Caco-2 (cell line): ENCODE measurements at regions of chr7 and their contacts with region 1.

Region 1: DNA sequence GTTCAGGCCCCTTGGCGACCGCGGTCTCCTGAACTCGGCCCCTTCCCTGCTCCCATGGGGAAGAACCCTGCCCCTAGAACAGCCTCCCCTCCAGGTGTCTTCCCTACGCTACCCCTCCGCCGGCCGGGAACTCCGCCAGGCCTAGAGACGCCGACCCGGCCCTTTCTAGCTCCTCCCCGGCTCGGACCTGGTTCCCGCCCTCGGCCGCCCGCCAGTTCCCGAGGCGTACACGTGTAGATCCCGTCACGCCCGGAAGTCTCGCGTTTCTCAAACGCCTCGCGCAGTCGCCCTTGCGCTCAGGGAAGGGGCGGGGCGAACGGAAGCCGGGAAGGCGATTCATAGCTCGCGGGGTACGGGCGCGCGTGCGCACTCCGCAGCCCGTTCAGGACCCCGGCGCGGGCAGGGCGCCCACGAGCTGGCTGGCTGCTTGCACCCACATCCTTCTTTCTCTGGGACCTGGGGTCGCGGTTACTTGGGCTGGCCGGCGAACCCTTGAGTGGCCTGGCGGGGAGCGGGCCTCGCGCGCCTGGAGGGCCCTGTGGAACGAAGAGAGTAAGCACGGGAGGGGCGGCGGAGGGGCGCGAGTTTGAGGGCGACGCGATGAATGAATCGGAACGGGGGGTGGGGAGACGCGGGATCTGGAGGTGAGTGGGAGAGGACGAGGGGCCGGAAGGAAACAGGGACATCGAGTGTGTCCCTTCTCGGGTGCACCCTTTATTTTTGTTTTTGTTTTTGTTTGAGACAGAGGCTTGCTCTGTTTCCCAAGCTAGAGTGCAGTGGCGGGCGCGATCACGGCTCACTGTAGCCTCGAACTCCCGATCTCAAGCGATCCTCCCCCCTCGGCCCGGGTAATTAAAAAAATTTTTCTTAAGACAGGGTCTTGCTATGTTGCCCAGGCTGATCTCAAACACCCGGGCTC is at the start of gene POP7:
- DNase-seq: peak; percentile 99
- H3K4me3 ChIP-seq: peak within 1 kb of the TSS; percentile 81
- H3K4me3 Mint-ChIP-seq: peak within 1 kb of the TSS; percentile 98
- H3K27ac Mint-ChIP-seq: peak within 1 kb of the TSS; percentile 97
- H3K4me1 ChIP-seq: peaks cover 7% of the 10 kb centered on the region
- H3K4me1 Mint-ChIP-seq: peaks cover 6% of the 10 kb centered on the region
- H3K27me3 ChIP-seq: no peaks in the 10 kb centered on the region
- H3K27me3 Mint-ChIP-seq: no peaks in the 10 kb centered on the region
- CTCF ChIP-seq: no peak
- total RNA-seq, gene POP7: 65.7 and 66.9 TPM in 2 replicates

Region 2: GRCh38 chr7:100570954-100571828 is 134.8 kb before region 1 on chr7:
- CTCF ChIA-PET with region 1: no interaction called
- POLR2A ChIA-PET with region 1: no interaction called
- intact Hi-C with region 1: no loop called
- DNase-seq: peak in 1 of 2 experiments; percentile 53
- H3K4me3 ChIP-seq: no peak overlapping the region
- H3K4me3 Mint-ChIP-seq: no peak overlapping the region
- H3K27ac Mint-ChIP-seq: peak overlapping the region; percentile 85
- H3K4me1 ChIP-seq: peaks cover 32% of the 10 kb centered on the region
- H3K4me1 Mint-ChIP-seq: peaks cover 15% of the 10 kb centered on the region
- H3K27me3 ChIP-seq: no peaks in the 10 kb centered on the region
- H3K27me3 Mint-ChIP-seq: no peaks in the 10 kb centered on the region
- CTCF ChIP-seq: peak in 1 of 2 experiments; percentile 2

Region 3: GRCh38 chr7:100632951-100633717 is 72.9 kb before region 1 on chr7:
- CTCF ChIA-PET with region 1: interaction called, 13 read pairs
- POLR2A ChIA-PET with region 1: interaction called, 7 read pairs
- intact Hi-C with region 1: no loop called
- DNase-seq: peak; percentile 85 to 86
- H3K4me3 ChIP-seq: peak overlapping the region; percentile 52
- H3K4me3 Mint-ChIP-seq: peak overlapping the region; percentile 79
- H3K27ac Mint-ChIP-seq: peak overlapping the region; percentile 92
- H3K4me1 ChIP-seq: no peaks in the 10 kb centered on the region
- H3K4me1 Mint-ChIP-seq: no peaks in the 10 kb centered on the region
- H3K27me3 ChIP-seq: no peaks in the 10 kb centered on the region
- H3K27me3 Mint-ChIP-seq: no peaks in the 10 kb centered on the region
- CTCF ChIP-seq: peak; percentile 67 to 70

Region 4: DNA sequence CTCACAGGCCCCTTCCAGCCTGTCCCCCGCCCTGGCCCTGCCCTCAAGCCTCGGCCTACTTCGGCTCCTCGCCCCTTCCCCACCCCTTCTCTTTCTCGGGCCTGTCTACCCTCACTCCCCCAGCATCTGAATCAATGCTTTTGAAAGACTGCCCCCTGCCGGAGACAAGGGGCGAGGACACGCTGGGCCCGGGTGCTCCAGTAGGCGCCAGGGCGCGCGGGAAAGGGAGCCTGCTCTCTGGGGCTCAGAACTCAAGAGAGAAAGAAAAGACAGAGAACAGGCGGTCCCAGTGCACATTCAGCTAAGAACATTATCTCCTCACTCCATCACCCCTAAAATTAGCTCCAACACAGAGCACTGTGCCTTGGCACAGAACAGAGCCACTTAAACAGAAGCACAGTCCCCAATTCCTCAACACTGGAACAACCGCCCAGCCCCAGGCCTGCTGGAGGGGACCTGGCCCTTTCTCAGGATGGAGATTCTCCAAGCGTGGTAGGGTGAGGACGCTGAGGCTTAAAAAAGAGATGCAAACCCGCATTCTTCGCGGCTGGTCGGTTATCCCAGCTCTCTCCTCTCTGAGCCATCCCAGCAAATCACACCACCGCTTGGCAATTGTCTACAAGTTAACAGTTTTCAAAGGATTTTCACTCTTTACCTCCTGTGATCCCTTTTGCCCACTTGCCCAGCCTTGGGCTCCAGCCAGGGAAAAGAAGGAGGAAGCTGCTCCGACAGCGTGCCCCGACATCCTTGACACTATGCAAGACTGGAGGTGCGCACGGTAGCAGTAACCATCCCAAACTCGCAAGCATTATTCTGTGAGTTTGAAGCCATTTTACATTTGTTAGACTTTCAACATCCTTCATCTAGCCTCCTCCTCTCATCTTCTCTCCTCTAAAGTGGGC is 14.1 kb before region 1 on chr7:
- CTCF ChIA-PET with region 1: interaction called, 21 read pairs
- POLR2A ChIA-PET with region 1: interaction called, 18 read pairs
- intact Hi-C with region 1: no loop called
- DNase-seq: peak in 1 of 2 experiments; percentile 77
- H3K4me3 ChIP-seq: peak overlapping the region; percentile 55
- H3K4me3 Mint-ChIP-seq: peak overlapping the region; percentile 96
- H3K27ac Mint-ChIP-seq: no peak overlapping the region
- H3K4me1 ChIP-seq: peaks cover 19% of the 10 kb centered on the region
- H3K4me1 Mint-ChIP-seq: peaks cover 18% of the 10 kb centered on the region
- H3K27me3 ChIP-seq: no peaks in the 10 kb centered on the region
- H3K27me3 Mint-ChIP-seq: no peaks in the 10 kb centered on the region
- CTCF ChIP-seq: peak; percentile 68 to 77

Region 5: GRCh38 chr7:100726996-100727761 is 21.2 kb after region 1 on chr7:
- CTCF ChIA-PET with region 1: interaction called, 155 read pairs
- POLR2A ChIA-PET with region 1: interaction called, 11 read pairs
- intact Hi-C with region 1: loop called (anchors 1 kb)
- DNase-seq: no peak
- H3K4me3 ChIP-seq: no peak overlapping the region
- H3K4me3 Mint-ChIP-seq: no peak overlapping the region
- H3K27ac Mint-ChIP-seq: no peak overlapping the region
- H3K4me1 ChIP-seq: 0 out of 2 replicates have a peak, but pooled peaks cover 5% of the 10 kb centered on the region
- H3K4me1 Mint-ChIP-seq: peaks cover 5% of the 10 kb centered on the region
- H3K27me3 ChIP-seq: no peaks in the 10 kb centered on the region
- H3K27me3 Mint-ChIP-seq: no peaks in the 10 kb centered on the region
- CTCF ChIP-seq: no peak

Region 6: DNA sequence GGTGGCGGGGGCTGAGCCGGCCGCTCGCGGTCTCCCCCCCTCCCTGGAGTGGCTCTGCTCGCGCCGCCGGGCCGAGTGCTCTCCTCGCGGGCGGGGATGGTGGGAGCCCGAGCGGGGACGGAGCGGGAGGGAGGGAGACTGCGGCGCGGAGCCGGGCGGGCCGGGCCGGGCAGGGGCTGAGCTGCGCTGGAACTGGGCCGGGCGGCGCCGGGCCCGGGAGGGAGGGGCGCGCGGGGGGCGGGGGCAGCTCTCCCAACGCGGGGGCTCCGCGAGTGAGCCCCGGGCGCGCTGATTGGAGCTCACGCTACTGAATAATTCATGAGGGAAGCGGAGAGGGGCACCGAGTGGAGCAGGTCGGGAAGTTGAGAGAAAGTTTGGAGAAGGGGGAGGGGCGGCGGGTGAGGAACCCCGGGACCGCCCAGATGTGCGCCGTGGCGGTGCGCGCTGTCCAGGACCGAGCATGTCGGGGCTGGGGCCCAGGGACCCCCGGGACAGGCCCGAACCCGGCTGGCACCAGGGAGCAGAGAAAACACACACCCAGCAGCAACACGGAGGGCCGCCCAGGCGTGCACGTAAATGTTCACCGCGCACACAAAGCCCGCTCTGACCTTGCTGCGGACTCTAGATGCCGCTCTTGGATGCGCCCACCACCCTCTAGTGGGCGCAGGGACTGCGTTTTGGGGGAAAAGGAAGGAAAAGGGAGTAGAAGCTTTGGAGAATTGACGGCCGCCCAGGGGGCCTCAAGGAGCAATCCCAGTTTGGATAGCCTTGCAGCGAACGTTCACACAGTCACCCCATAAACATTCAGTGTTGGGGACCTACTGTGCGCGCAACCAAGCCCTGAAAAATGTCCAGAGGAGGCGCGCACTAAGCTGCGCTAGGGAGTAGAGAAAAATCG is 121.6 kb after region 1 on chr7 and contains the start of gene EPHB4:
- CTCF ChIA-PET with region 1: interaction called, 51 read pairs
- POLR2A ChIA-PET with region 1: interaction called, 19 read pairs
- intact Hi-C with region 1: loop called (anchors 1 kb)
- DNase-seq: peak; percentile 93 to 95
- H3K4me3 ChIP-seq: peak within 1 kb of the TSS; percentile 71
- H3K4me3 Mint-ChIP-seq: peak within 1 kb of the TSS; percentile 89
- H3K27ac Mint-ChIP-seq: peak within 1 kb of the TSS; percentile 88
- H3K4me1 ChIP-seq: peaks cover 29% of the 10 kb centered on the region
- H3K4me1 Mint-ChIP-seq: peaks cover 27% of the 10 kb centered on the region
- H3K27me3 ChIP-seq: no peaks in the 10 kb centered on the region
- H3K27me3 Mint-ChIP-seq: no peaks in the 10 kb centered on the region
- CTCF ChIP-seq: peak; percentile 44 to 92
- total RNA-seq, gene EPHB4: 112 and 117 TPM in 2 replicates

Region 7: GRCh38 chr7:100874577-100875355 is 168.8 kb after region 1 on chr7 and contains the start of gene SRRT:
- CTCF ChIA-PET with region 1: interaction called, 4 read pairs
- POLR2A ChIA-PET with region 1: interaction called, 24 read pairs
- intact Hi-C with region 1: no loop called
- DNase-seq: peak; percentile 98 to 99
- H3K4me3 ChIP-seq: peak within 1 kb of the TSS; percentile 81
- H3K4me3 Mint-ChIP-seq: peak within 1 kb of the TSS; percentile 85
- H3K27ac Mint-ChIP-seq: peak within 1 kb of the TSS; percentile 98
- H3K4me1 ChIP-seq: peaks cover 10% of the 10 kb centered on the region; the same call in 1 of the 2 replicates
- H3K4me1 Mint-ChIP-seq: peaks cover 14% of the 10 kb centered on the region
- H3K27me3 ChIP-seq: no peaks in the 10 kb centered on the region
- H3K27me3 Mint-ChIP-seq: no peaks in the 10 kb centered on the region
- CTCF ChIP-seq: peak; percentile 33 to 48
- total RNA-seq, gene SRRT: 211 and 243 TPM in 2 replicates

Region 8: DNA sequence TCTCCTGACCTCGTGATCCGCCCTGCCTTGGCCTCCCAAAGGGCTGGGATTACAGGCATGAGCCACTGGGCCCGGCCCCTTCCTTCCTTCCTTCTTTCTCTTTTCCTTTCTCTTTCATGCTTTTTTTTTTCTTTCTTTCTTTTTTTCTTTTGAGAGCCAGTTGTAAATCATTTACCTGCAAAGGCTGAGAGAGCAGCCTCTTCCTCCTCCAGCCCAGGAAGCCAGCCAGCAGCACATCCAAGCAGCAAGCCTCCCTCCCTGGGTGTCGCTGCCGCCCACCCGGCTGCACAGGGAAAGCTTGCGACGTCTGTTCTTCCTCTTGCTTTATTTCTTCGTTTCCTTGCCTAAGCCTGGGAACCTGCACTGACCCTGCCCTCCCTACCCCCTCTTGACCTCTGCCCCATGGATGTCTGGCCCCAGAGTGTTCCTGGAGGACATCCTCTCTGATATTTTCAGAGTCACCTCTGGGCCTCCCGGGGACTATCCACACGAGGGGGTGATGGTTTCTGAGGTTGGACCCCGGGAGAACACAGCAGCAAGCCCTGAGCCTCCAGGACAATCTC is 985.9 kb after region 1 on chr7:
- CTCF ChIA-PET with region 1: no interaction called
- POLR2A ChIA-PET with region 1: no interaction called
- intact Hi-C with region 1: no loop called
- DNase-seq: peak; percentile 60 to 74
- H3K4me3 ChIP-seq: no peak overlapping the region
- H3K4me3 Mint-ChIP-seq: no peak overlapping the region
- H3K27ac Mint-ChIP-seq: peak overlapping the region; percentile 50
- H3K4me1 ChIP-seq: peaks cover 19% of the 10 kb centered on the region
- H3K4me1 Mint-ChIP-seq: peaks cover 13% of the 10 kb centered on the region
- H3K27me3 ChIP-seq: no peaks in the 10 kb centered on the region
- H3K27me3 Mint-ChIP-seq: no peaks in the 10 kb centered on the region
- CTCF ChIP-seq: peak in 1 of 2 experiments; percentile 19